ENCODE measurements at regions of chr18 and their contacts with region 1.

Region 1: GRCh38 chr18:79366177-79367094 is 29.3 kb upstream of the NFATC1 start:
- DNase-seq: peak in 1 of 10 donors; percentile 31
- H3K4me3 ChIP-seq: no peak overlapping the region
- H3K27ac ChIP-seq: peak overlapping the region in 35 of 59 donors; percentile 4 to 80 (median 38)
- H3K27me3 ChIP-seq: no peaks in the 10 kb centered on the region
- CTCF ChIP-seq: no peak

Region 2: GRCh38 chr18:77765468-77765867 is 1601.0 kb before region 1 on chr18:
- intact Hi-C with region 1: loop called in 1 of 2 experiments (anchors 10 kb)
- DNase-seq: peak in 7 of 10 donors; percentile 21 to 66 (median 57)
- H3K4me3 ChIP-seq: no peak overlapping the region
- H3K27ac ChIP-seq: no peak overlapping the region
- H3K27me3 ChIP-seq: peaks cover 0 to 20% (median 0%) of the 10 kb centered on the region in 45 donors
- CTCF ChIP-seq: peak; percentile 11 to 73 (median 47)

Measured in dorsolateral prefrontal cortex (tissue), 120 donors.